ENCODE measurements at regions of chr14 and their contacts with region 1.

Region 1: DNA sequence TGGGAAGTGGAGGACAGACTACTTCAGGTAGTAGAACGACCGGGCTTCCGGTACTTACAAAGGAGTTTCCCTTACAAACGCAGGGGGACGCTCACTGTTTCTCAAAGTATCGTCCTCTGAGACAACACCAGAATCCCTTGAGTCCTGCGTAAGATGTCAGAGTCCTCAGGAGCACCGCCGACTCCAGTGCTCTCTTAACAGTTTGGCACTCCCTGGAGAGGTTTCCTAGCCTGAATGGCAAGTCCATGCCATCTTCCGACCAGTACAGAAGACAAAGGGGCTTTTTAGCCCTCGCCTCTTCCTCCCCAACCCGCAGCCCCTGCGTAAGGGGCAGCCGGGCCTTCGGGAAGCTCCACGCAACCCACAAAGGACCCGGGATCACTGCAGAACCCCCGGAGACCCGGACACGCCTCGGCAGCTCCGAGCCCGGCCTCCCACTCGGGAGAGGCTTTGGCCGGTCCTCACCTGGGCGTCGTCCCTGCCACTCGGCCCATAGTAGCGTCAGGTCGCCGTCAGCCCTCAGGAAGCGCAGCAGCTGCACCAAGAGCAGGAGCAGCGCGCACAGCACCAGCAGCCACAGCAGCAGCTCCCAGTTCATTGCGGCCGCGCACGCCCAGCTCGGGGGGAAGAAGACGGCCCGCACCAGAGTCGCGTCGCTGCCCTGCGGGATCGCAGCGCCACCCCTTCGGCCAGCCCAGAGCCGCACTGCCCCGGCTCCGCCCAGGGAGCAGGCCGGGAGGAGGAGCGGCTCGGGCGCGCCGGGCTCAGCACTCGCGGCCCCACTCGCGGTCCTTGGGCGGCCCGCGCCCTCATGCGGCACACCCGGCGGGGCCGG is at the start of gene DHRS7:
- DNase-seq: peak; percentile 62
- ATAC-seq: peak; percentile 99
- H3K4me3 ChIP-seq: peak within 1 kb of the TSS; percentile 79 to 93 (median 88)
- H3K27ac ChIP-seq: peak within 1 kb of the TSS; percentile 70
- H3K4me1 ChIP-seq: peaks cover 24% of the 10 kb centered on the region
- H3K27me3 ChIP-seq: peaks cover 0 to 4% of the 10 kb centered on the region in 2 experiments; a peak in 1 of 5 replicates
- CTCF ChIP-seq: peak; percentile 79
- EP300 ChIP-seq: no peak
- POLR2A ChIP-seq: peak; percentile 76 to 78
- RAD21 ChIP-seq: peak; percentile 74
- total RNA-seq, gene DHRS7: 25.2 and 44.4 TPM in 2 replicates

Region 2: GRCh38 chr14:59964251-59965007 is 200.5 kb before region 1 on chr14:
- CTCF ChIA-PET with region 1: no interaction called
- POLR2A ChIA-PET with region 1: interaction called, 4 read pairs
- in situ Hi-C with region 1: no loop called
- intact Hi-C with region 1: loop called (anchors 5 kb)
- DNase-seq: no peak
- ATAC-seq: peak; percentile 41
- H3K4me3 ChIP-seq: no peak overlapping the region
- H3K27ac ChIP-seq: no peak overlapping the region
- H3K4me1 ChIP-seq: no peaks in the 10 kb centered on the region
- H3K27me3 ChIP-seq: no peaks in the 10 kb centered on the region
- CTCF ChIP-seq: no peak
- EP300 ChIP-seq: no peak
- POLR2A ChIP-seq: no peak
- RAD21 ChIP-seq: no peak

Region 3: GRCh38 chr14:60064491-60065072 is 100.3 kb before region 1 on chr14:
- CTCF ChIA-PET with region 1: interaction called, 7 read pairs
- POLR2A ChIA-PET with region 1: no interaction called
- in situ Hi-C with region 1: no loop called
- intact Hi-C with region 1: loop called (anchors 1 kb)
- DNase-seq: peak; percentile 9
- ATAC-seq: no peak
- H3K4me3 ChIP-seq: no peak overlapping the region
- H3K27ac ChIP-seq: no peak overlapping the region
- H3K4me1 ChIP-seq: no peaks in the 10 kb centered on the region
- H3K27me3 ChIP-seq: no peaks in the 10 kb centered on the region; a peak in 1 of 5 replicates
- CTCF ChIP-seq: peak; percentile 54
- EP300 ChIP-seq: no peak
- POLR2A ChIP-seq: no peak
- RAD21 ChIP-seq: 0 out of 2 replicates have a peak, but pooled peaks have one; percentile 10

Region 4: GRCh38 chr14:60091550-60092530 is 73.1 kb before region 1 on chr14 and contains the start of gene PCNX4:
- CTCF ChIA-PET with region 1: no interaction called
- POLR2A ChIA-PET with region 1: interaction called, 9 read pairs
- in situ Hi-C with region 1: no loop called
- intact Hi-C with region 1: loop called (anchors 2 kb)
- DNase-seq: peak; percentile 94
- ATAC-seq: peak; percentile 92
- H3K4me3 ChIP-seq: peak within 1 kb of the TSS; percentile 84 to 95 (median 90)
- H3K27ac ChIP-seq: peak within 1 kb of the TSS; percentile 98
- H3K4me1 ChIP-seq: peaks cover 33% of the 10 kb centered on the region
- H3K27me3 ChIP-seq: peaks cover 0 to 3% of the 10 kb centered on the region in 2 experiments; a peak in 1 of 5 replicates
- CTCF ChIP-seq: peak; percentile 39
- EP300 ChIP-seq: 0 out of 4 replicates have a peak, but pooled peaks of 1 of the 2 experiments have one; percentile 12
- POLR2A ChIP-seq: peak; percentile 93 to 96
- RAD21 ChIP-seq: peak; percentile 11; the same call in 1 of the 2 replicates
- total RNA-seq, gene PCNX4: 30.0 and 43.0 TPM in 2 replicates

Region 5: GRCh38 chr14:60179431-60179869 is 14.5 kb after region 1 on chr14:
- CTCF ChIA-PET with region 1: no interaction called
- POLR2A ChIA-PET with region 1: no interaction called
- in situ Hi-C with region 1: no loop called
- intact Hi-C with region 1: no loop called
- DNase-seq: no peak
- ATAC-seq: no peak
- H3K4me3 ChIP-seq: no peak overlapping the region
- H3K27ac ChIP-seq: no peak overlapping the region
- H3K4me1 ChIP-seq: peaks cover 12% of the 10 kb centered on the region; the same call in 1 of the 2 replicates
- H3K27me3 ChIP-seq: peaks cover 0 to 5% of the 10 kb centered on the region in 2 experiments; a peak in 1 of 5 replicates
- CTCF ChIP-seq: no peak
- EP300 ChIP-seq: no peak
- POLR2A ChIP-seq: no peak
- RAD21 ChIP-seq: no peak

Region 6: GRCh38 chr14:60212503-60213371 is 47.8 kb after region 1 on chr14:
- CTCF ChIA-PET with region 1: no interaction called
- POLR2A ChIA-PET with region 1: no interaction called
- in situ Hi-C with region 1: no loop called
- intact Hi-C with region 1: no loop called
- DNase-seq: no peak
- ATAC-seq: no peak
- H3K4me3 ChIP-seq: no peak overlapping the region
- H3K27ac ChIP-seq: no peak overlapping the region
- H3K4me1 ChIP-seq: no peaks in the 10 kb centered on the region
- H3K27me3 ChIP-seq: no peaks in the 10 kb centered on the region; a peak in 2 of 5 replicates
- CTCF ChIP-seq: no peak
- EP300 ChIP-seq: no peak
- POLR2A ChIP-seq: no peak
- RAD21 ChIP-seq: no peak

Region 7: GRCh38 chr14:60248697-60249318 is 83.9 kb after region 1 on chr14 and contains the start of gene PPM1A:
- CTCF ChIA-PET with region 1: no interaction called
- POLR2A ChIA-PET with region 1: interaction called, 11 read pairs
- in situ Hi-C with region 1: no loop called
- intact Hi-C with region 1: no loop called
- DNase-seq: peak; percentile 84
- ATAC-seq: peak; percentile 74
- H3K4me3 ChIP-seq: peak within 1 kb of the TSS; percentile 81 to 82 (median 81)
- H3K27ac ChIP-seq: peak within 1 kb of the TSS; percentile 93
- H3K4me1 ChIP-seq: peaks cover 47% of the 10 kb centered on the region
- H3K27me3 ChIP-seq: no peaks in the 10 kb centered on the region; a peak in 1 of 5 replicates
- CTCF ChIP-seq: no peak
- EP300 ChIP-seq: no peak; a peak in 1 of 4 replicates
- POLR2A ChIP-seq: peak; percentile 91 to 94
- RAD21 ChIP-seq: no peak
- total RNA-seq, gene PPM1A: 29.8 and 37.6 TPM in 2 replicates

Measured in HepG2 (cell line).